ENCODE measurements at regions of chr5 and their contacts with region 1.

Region 1: DNA sequence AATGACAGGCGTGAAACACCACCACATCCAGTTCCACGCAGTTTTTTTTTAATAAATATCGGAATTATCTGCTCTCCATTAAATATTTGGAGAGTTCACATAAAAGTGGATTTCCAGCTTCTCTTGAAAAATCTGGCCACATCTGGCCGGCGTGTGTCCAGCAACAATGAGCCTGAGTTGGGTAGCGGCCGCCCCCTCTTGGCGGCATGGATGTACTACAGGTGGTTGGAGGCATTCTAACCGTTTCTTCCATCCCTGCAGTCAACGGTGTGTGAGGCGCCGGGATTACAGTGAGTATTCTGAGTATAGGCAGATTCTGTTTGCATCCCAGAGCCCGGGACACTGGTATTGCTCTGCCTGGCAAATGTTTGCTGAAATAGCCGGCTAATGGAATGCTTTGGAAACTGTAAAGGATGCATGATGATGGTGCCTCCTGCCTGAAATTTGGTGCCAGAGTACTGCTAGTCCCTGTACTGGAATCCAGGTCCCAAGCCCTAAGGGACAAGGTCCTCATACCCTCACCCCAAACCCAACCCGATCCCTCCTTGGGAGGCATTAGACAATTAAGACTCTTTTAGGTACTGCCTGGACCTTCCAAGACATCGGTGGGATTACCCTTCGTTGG is 13.6 kb upstream of the GM2A start:
- DNase-seq: peak; percentile 81
- ATAC-seq: peak; percentile 83
- H3K4me3 Mint-ChIP-seq: no peak overlapping the region
- H3K27ac Mint-ChIP-seq: no peak overlapping the region; the same call in 1 of the 2 replicates
- H3K4me1 Mint-ChIP-seq: peaks cover 35% of the 10 kb centered on the region
- H3K27me3 Mint-ChIP-seq: no peaks in the 10 kb centered on the region
- CTCF ChIP-seq: peak; percentile 91

Region 2: GRCh38 chr5:151141535-151141934 is 97.8 kb before region 1 on chr5:
- CTCF ChIA-PET with region 1: interaction called, 16 read pairs
- POLR2A ChIA-PET with region 1: no interaction called
- DNase-seq: peak; percentile 60
- ATAC-seq: peak; percentile 85
- H3K4me3 Mint-ChIP-seq: no peak overlapping the region; the same call in 1 of the 2 replicates
- H3K27ac Mint-ChIP-seq: peak overlapping the region; percentile 93
- H3K4me1 Mint-ChIP-seq: peaks cover 18% of the 10 kb centered on the region
- H3K27me3 Mint-ChIP-seq: no peaks in the 10 kb centered on the region
- CTCF ChIP-seq: no peak

Region 3: DNA sequence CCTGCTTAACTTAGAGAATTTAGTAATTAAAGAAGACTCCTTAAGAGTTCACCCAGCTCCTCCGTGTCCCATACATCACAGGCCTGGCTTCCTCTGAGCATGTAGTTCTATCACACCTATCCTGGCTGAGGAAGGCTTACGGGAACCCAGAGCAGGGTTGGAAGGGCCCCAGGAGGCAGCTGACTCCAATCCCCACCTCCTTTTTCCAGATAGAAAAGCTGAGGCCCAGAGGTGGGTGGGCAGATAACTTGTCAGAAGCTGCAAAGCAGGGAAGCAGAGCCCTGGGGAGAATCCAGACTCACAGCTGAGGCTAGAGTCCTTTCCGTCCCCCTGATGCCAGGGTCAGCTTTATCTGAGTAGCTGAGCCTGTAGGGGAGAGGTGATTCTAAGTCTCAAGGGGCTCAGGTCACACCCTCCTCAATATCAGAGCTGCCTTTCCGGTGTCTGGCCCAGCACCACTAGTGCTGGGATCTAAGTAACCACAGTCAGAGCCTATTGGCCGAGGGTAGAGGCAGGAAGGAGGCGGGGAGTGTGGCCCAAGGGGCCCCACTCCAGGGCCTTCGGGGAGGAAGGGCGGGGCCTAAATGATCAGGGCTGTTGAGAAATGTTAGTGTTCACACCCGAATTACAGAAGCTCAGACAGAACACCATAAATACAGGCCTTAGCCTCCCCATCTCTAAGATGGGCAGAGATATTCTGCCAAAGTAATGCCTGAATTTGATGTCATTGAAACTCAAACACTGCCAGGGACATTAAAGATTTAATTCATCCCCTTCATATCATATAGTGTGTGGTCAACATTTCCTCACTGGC is 25.3 kb before region 1 on chr5:
- CTCF ChIA-PET with region 1: interaction called, 23 read pairs
- POLR2A ChIA-PET with region 1: no interaction called
- DNase-seq: peak; percentile 40
- ATAC-seq: peak; percentile 99
- H3K4me3 Mint-ChIP-seq: no peak overlapping the region
- H3K27ac Mint-ChIP-seq: no peak overlapping the region
- H3K4me1 Mint-ChIP-seq: peaks cover 8% of the 10 kb centered on the region
- H3K27me3 Mint-ChIP-seq: no peaks in the 10 kb centered on the region
- CTCF ChIP-seq: no peak

Region 4: DNA sequence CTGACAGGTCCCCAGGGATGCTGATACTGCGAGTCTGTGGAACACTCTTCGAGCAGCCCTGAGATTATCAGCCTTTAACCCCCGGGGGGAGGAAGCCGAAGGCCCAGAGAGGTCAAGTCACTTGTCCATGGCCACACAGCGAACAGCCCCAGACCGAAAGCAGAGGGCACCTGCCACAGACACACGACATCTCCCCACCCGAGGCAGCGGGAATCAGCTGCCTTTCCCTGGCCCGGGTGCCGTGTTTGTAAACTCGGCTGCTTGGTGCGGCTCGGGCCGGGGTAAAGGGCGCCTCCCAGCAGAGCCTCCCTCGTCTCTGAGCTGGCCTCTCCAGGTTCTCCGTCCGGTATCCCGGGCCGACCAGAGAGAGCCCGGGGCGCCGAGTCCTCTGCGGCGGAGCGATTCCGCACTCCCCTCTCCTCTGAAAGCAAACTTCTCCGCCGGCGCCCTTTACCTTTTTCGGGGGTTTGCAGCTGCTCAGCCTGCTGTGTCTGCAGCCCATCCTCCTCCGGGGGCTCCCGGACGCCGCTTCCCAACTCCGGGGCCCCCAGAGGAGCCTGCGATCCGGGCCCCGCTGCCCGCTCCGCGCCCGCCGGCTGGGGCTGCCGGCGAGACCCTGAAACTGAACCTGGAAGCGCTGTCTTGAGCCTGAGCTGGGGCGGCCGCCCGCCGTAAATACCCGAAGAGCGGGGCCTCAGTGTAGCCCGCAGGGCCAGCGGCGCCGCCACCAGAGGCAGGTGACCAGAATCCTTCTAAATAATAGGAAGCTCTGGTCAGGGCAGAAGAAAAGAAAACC is 15.7 kb before region 1 on chr5 and contains the start of gene CCDC69:
- CTCF ChIA-PET with region 1: interaction called, 41 read pairs
- POLR2A ChIA-PET with region 1: interaction called, 5 read pairs
- DNase-seq: peak; percentile 79
- ATAC-seq: peak; percentile 91
- H3K4me3 Mint-ChIP-seq: peak within 1 kb of the TSS; percentile 78
- H3K27ac Mint-ChIP-seq: no peak within 1 kb of the TSS
- H3K4me1 Mint-ChIP-seq: peaks cover 25% of the 10 kb centered on the region
- H3K27me3 Mint-ChIP-seq: no peaks in the 10 kb centered on the region; the same call in 1 of the 2 replicates
- CTCF ChIP-seq: no peak
- total RNA-seq, gene CCDC69: 8.2 to 12.4 TPM (median 8.6 TPM) in 3 replicates

Region 5: GRCh38 chr5:151252762-151253604 is 13.6 kb after region 1 on chr5 and contains the start of gene GM2A:
- CTCF ChIA-PET with region 1: interaction called, 70 read pairs
- POLR2A ChIA-PET with region 1: interaction called, 7 read pairs
- DNase-seq: peak; percentile 100
- ATAC-seq: peak; percentile 96
- H3K4me3 Mint-ChIP-seq: peak within 1 kb of the TSS; percentile 90
- H3K27ac Mint-ChIP-seq: peak within 1 kb of the TSS; percentile 92
- H3K4me1 Mint-ChIP-seq: peaks cover 35% of the 10 kb centered on the region
- H3K27me3 Mint-ChIP-seq: peaks cover 6% of the 10 kb centered on the region
- CTCF ChIP-seq: no peak
- total RNA-seq, gene GM2A: 33.1 to 36.2 TPM (median 33.2 TPM) in 3 replicates

Region 6: DNA sequence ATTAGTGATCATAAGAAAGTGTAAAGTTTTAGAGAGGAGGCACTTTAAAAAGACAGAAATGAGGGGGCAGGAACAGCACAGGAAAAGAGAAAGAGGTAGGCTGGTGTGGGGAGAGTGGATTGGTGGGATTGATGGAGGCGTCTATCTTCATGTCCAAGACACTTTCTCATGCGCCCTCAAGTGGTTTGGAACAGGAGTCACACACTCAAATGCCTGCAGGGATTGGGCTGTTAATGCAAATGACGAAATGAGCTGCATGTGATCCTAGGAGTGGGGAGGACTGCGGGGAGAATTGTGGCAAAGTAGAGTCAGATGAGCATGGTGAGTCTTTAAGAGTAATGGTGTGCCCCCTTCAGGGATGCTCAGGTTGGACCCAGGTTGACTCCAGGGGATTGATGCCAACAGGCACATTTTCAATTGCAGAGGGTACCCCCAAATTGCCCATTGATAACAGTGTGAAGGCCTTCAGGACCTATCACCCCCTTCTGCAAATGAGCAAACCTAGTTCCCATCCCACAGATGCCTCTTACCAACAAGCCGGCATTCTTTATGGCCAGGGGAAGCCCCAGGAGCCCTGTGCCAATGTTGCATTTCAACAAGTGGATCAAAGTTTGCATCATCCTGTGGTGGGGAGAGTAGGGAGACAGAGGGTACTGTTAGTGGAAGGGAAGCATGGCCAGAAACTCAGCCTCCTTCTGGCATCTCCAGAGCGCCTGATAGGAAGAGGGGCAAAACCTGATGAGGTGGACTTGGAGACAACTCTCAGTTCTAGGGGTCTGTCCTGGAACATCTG is 58.9 kb after region 1 on chr5:
- CTCF ChIA-PET with region 1: interaction called, 12 read pairs
- POLR2A ChIA-PET with region 1: no interaction called
- DNase-seq: peak; percentile 49
- ATAC-seq: peak; percentile 87
- H3K4me3 Mint-ChIP-seq: no peak overlapping the region
- H3K27ac Mint-ChIP-seq: no peak overlapping the region
- H3K4me1 Mint-ChIP-seq: peaks cover 11% of the 10 kb centered on the region
- H3K27me3 Mint-ChIP-seq: no peaks in the 10 kb centered on the region; the same call in 1 of the 2 replicates
- CTCF ChIP-seq: no peak